ENCODE measurements at regions of chr11 and their contacts with region 1.

Region 1: GRCh38 chr11:33257897-33258630 is 883 bp downstream of the HIPK3 start:
- DNase-seq: peak; percentile 83
- ATAC-seq: peak; percentile 65
- H3K4me3 ChIP-seq: peak overlapping the region; percentile 96
- H3K27ac ChIP-seq: peak overlapping the region; percentile 100
- H3K4me1 ChIP-seq: peaks cover 3% of the 10 kb centered on the region
- H3K27me3 ChIP-seq: no peaks in the 10 kb centered on the region
- CTCF ChIP-seq: 0 out of 2 replicates have a peak, but pooled peaks have one; percentile 19
- POLR2A ChIP-seq: peak; percentile 64
- RAD21 ChIP-seq: no peak

Region 2: DNA sequence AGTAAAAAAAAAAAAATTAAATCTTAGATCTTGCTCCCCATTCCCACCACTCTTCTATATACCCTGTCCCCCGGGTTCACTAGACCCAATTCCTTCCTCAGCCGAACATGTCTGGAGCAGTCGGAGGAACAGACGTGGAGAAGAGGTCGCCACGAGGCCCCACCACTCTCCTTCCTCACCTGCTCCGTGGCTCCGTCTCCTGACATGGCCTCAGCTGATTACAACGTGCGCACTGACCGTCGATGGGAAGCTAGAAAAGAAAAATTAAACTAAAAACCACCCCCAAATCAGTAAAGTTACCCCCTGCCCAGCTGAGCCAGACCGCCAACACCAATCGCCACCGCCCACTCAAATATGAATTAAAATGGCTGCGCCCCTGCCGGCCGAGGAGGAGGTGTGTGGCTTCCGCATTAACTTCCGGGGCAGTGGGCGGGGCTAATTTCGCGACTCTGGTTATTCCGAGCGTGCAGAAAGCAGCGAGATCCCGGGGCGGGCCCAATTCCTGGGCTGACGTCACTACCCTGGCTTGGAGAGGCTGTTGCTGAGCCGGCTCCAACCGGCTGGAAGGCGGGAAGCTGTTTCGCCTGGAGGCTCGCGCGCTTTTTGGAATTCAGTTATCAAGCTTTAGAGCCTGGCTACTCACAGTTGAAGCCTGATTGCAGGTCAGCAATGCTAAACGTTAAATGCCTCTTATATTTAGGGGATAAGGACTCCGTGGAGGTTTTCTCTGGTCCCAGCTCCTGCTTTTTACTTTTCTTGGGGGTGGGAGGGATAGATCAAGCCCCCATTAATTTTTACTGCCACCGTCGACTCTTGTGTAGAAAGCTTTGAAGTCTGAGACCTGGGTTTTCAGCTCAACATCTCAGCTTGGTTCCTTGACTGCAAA is 96.7 kb before region 1 on chr11 and contains the start of gene CSTF3:
- CTCF ChIA-PET with region 1: interaction called, 4 read pairs
- POLR2A ChIA-PET with region 1: no interaction called
- dilution Hi-C with region 1: no loop called
- in situ Hi-C with region 1: no loop called
- intact Hi-C with region 1: loop called (anchors 1 kb)
- DNase-seq: peak; percentile 98
- ATAC-seq: peak; percentile 97
- H3K4me3 ChIP-seq: peak within 1 kb of the TSS; percentile 59
- H3K27ac ChIP-seq: peak within 1 kb of the TSS; percentile 69
- H3K4me1 ChIP-seq: peaks cover 4% of the 10 kb centered on the region
- H3K27me3 ChIP-seq: no peaks in the 10 kb centered on the region
- CTCF ChIP-seq: peak; percentile 42; the same call in 1 of the 2 replicates
- POLR2A ChIP-seq: peak; percentile 90
- RAD21 ChIP-seq: no peak; the same call in 1 of the 2 replicates
- total RNA-seq, gene CSTF3: 14.5 and 31.4 TPM in 2 replicates

Region 3: GRCh38 chr11:33179348-33179803 is 78.7 kb before region 1 on chr11:
- CTCF ChIA-PET with region 1: interaction called, 3 read pairs
- POLR2A ChIA-PET with region 1: no interaction called
- dilution Hi-C with region 1: no loop called
- in situ Hi-C with region 1: loop called (anchors 5 kb)
- intact Hi-C with region 1: no loop called
- DNase-seq: no peak
- ATAC-seq: no peak
- H3K4me3 ChIP-seq: no peak overlapping the region
- H3K27ac ChIP-seq: no peak overlapping the region
- H3K4me1 ChIP-seq: peaks cover 9% of the 10 kb centered on the region
- H3K27me3 ChIP-seq: no peaks in the 10 kb centered on the region
- CTCF ChIP-seq: no peak
- POLR2A ChIP-seq: no peak
- RAD21 ChIP-seq: no peak

Region 4: GRCh38 chr11:33273656-33274055 is 15.6 kb after region 1 on chr11:
- CTCF ChIA-PET with region 1: no interaction called
- POLR2A ChIA-PET with region 1: no interaction called
- dilution Hi-C with region 1: no loop called
- in situ Hi-C with region 1: no loop called
- intact Hi-C with region 1: loop called (anchors 2 kb)
- DNase-seq: no peak
- ATAC-seq: no peak
- H3K4me3 ChIP-seq: no peak overlapping the region
- H3K27ac ChIP-seq: no peak overlapping the region
- H3K4me1 ChIP-seq: peaks cover 6% of the 10 kb centered on the region
- H3K27me3 ChIP-seq: no peaks in the 10 kb centered on the region
- CTCF ChIP-seq: no peak
- POLR2A ChIP-seq: no peak
- RAD21 ChIP-seq: no peak

Region 5: DNA sequence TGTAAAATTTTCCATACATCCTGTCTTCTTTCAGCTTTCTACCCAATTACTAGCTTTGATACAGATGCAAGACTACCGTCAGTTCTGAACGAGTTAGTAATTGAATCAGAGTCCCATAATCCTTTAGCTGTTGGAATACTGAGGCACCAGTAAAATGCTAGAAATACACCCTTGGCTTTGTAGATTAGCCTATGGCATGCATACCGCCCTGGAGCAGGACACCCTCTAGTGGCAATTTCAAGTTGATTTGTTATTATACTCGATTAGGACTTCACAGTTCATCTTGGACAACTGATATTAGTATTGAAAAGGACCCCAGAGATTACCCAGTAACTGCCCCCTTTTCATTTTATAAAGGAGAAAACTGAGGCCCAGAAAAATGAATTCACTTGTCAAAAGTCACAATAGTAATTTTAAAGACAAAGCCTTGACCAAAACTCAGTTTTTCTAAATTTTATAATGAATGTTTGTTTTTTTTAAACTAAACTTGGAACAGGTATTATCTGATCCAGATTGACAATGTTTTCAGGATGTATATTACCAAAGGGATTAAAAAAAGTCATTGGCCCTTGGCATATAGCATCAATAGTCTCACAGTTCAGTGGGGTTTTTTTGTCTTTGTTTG is 71.8 kb after region 1 on chr11:
- CTCF ChIA-PET with region 1: no interaction called
- POLR2A ChIA-PET with region 1: no interaction called
- dilution Hi-C with region 1: no loop called
- in situ Hi-C with region 1: loop called (anchors 5 kb)
- intact Hi-C with region 1: loop called (anchors 1 kb)
- DNase-seq: peak; percentile 72
- ATAC-seq: peak; percentile 68
- H3K4me3 ChIP-seq: no peak overlapping the region
- H3K27ac ChIP-seq: no peak overlapping the region
- H3K4me1 ChIP-seq: no peaks in the 10 kb centered on the region; the same call in 1 of the 2 replicates
- H3K27me3 ChIP-seq: no peaks in the 10 kb centered on the region
- CTCF ChIP-seq: peak; percentile 73
- POLR2A ChIP-seq: no peak
- RAD21 ChIP-seq: peak; percentile 85

Region 6: GRCh38 chr11:33606762-33607161 is 348.7 kb after region 1 on chr11:
- CTCF ChIA-PET with region 1: no interaction called
- POLR2A ChIA-PET with region 1: no interaction called
- dilution Hi-C with region 1: no loop called
- in situ Hi-C with region 1: no loop called
- intact Hi-C with region 1: no loop called
- DNase-seq: no peak
- ATAC-seq: no peak
- H3K4me3 ChIP-seq: no peak overlapping the region
- H3K27ac ChIP-seq: no peak overlapping the region
- H3K4me1 ChIP-seq: no peaks in the 10 kb centered on the region
- H3K27me3 ChIP-seq: no peaks in the 10 kb centered on the region
- CTCF ChIP-seq: no peak
- POLR2A ChIP-seq: no peak
- RAD21 ChIP-seq: no peak

Region 7: GRCh38 chr11:33819278-33819677 is 561.2 kb after region 1 on chr11:
- CTCF ChIA-PET with region 1: no interaction called
- POLR2A ChIA-PET with region 1: no interaction called
- dilution Hi-C with region 1: no loop called
- in situ Hi-C with region 1: no loop called
- intact Hi-C with region 1: no loop called
- DNase-seq: no peak
- ATAC-seq: no peak
- H3K4me3 ChIP-seq: no peak overlapping the region
- H3K27ac ChIP-seq: no peak overlapping the region
- H3K4me1 ChIP-seq: no peaks in the 10 kb centered on the region
- H3K27me3 ChIP-seq: peaks cover 72% of the 10 kb centered on the region
- CTCF ChIP-seq: no peak
- POLR2A ChIP-seq: no peak
- RAD21 ChIP-seq: no peak

Measured in IMR-90 (cell line).